Mammary epithelial cell (primary cell): ENCODE measurements at regions of chr13 and their contacts with region 1.

Region 1: GRCh38 chr13:49278211-49278610 is 30.5 kb downstream of the CDADC1 start:
- DNase-seq: no peak
- H3K4me3 ChIP-seq: no peak overlapping the region
- H3K27ac ChIP-seq: no peak overlapping the region
- H3K4me1 ChIP-seq: no peaks in the 10 kb centered on the region
- H3K27me3 ChIP-seq: no peaks in the 10 kb centered on the region
- CTCF ChIP-seq: no peak

Region 2: DNA sequence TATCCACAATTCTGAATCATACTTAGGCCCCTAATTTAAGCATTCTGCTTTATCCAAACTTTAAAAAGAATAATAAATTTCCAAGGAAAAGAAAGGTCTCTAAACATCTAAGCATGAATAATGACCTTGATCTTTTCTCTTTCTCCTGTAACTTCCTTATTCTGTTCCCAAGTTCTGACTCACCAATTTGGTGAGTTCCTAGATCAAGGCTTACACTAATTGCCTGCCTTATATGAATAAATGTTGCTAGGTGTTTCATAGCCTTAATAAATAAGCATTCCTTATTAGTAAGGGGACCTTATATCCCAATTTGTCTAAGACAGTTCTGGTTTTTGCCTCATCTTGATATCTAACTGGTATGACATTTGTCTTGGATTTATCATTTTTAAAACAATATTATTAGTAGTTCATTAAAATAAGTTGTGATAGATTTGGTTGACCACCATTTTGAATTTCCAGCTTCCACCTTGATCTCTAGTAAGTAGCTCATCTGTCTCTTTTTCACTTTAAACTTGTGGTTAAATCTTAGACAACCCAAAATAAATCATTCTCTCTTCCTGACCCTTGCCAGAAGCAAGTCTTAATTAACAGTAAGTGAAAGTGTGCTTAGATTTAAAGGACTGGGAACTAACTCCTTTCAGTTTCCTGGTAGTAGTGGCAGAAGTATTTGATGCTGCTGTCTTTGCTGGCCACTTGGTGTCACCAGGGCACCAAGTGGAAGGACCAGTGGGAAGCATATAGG is 179.3 kb before region 1 on chr13:
- CTCF ChIA-PET with region 1: no interaction called
- dilution Hi-C with region 1: no loop called
- in situ Hi-C with region 1: no loop called
- intact Hi-C with region 1: loop called (anchors 2 kb)
- DNase-seq: no peak
- H3K4me3 ChIP-seq: no peak overlapping the region
- H3K27ac ChIP-seq: peak overlapping the region; percentile 14
- H3K4me1 ChIP-seq: peaks cover 22% of the 10 kb centered on the region
- H3K27me3 ChIP-seq: no peaks in the 10 kb centered on the region
- CTCF ChIP-seq: peak; percentile 13 to 51

Region 3: DNA sequence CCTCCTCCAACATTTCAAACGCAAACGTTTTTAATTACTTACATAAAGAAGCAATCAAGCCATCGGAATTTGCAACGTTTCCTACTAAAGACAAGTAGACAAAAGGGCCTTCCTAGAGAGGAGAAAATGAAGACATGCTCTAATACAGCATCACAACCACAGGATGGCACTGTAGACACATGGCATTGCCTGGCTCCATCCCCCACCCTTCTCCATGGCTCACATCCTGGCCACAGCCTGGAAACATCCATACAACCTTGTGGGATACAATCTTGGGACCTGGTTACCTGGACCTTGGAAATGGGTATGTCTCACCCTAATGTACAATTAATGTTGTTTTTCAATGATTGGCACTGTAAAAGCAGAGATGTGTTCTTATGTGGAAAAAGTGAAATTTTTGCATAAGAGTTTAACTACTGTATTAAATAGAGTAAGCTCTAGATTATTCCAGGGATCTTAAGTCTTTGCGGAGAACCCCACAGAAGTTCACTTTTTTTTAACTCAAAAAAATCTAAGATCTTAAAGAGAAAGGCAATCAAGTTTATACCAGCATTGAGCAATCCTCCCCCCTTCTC is 391.6 kb after region 1 on chr13:
- CTCF ChIA-PET with region 1: no interaction called
- dilution Hi-C with region 1: no loop called
- in situ Hi-C with region 1: no loop called
- intact Hi-C with region 1: no loop called
- DNase-seq: peak; percentile 61
- H3K4me3 ChIP-seq: no peak overlapping the region
- H3K27ac ChIP-seq: no peak overlapping the region
- H3K4me1 ChIP-seq: no peaks in the 10 kb centered on the region
- H3K27me3 ChIP-seq: no peaks in the 10 kb centered on the region
- CTCF ChIP-seq: peak; percentile 66 to 80